ENCODE measurements at regions of chrX and their contacts with region 1.

Region 1: GRCh38 chrX:70168238-70169188 is 8.8 kb upstream of the DGAT2L6 start:
- DNase-seq: peak; percentile 43
- H3K4me3 ChIP-seq: peak overlapping the region; percentile 2; the same call in 1 of the 2 replicates
- H3K27ac ChIP-seq: peak overlapping the region; percentile 82
- H3K27me3 ChIP-seq: no peaks in the 10 kb centered on the region
- CTCF ChIP-seq: no peak

Region 2: GRCh38 chrX:69165087-69165651 is 1003.3 kb before region 1 on chrX and contains the start of gene PJA1:
- CTCF ChIA-PET with region 1: no interaction called
- POLR2A ChIA-PET with region 1: interaction called, 19 read pairs
- DNase-seq: no peak
- H3K4me3 ChIP-seq: peak within 1 kb of the TSS; percentile 81
- H3K27ac ChIP-seq: no peak within 1 kb of the TSS
- H3K27me3 ChIP-seq: peaks cover 2% of the 10 kb centered on the region
- CTCF ChIP-seq: no peak
- polyA plus RNA-seq, gene PJA1: 25.7 and 30.7 TPM in 2 replicates

Region 3: GRCh38 chrX:70183091-70183490 is 14.6 kb after region 1 on chrX:
- CTCF ChIA-PET with region 1: no interaction called
- POLR2A ChIA-PET with region 1: no interaction called
- DNase-seq: no peak
- H3K4me3 ChIP-seq: no peak overlapping the region
- H3K27ac ChIP-seq: no peak overlapping the region
- H3K27me3 ChIP-seq: no peaks in the 10 kb centered on the region
- CTCF ChIP-seq: no peak

Measured in AG04450 (cell line).